ENCODE measurements at regions of chr3 and their contacts with region 1.

Region 1: DNA sequence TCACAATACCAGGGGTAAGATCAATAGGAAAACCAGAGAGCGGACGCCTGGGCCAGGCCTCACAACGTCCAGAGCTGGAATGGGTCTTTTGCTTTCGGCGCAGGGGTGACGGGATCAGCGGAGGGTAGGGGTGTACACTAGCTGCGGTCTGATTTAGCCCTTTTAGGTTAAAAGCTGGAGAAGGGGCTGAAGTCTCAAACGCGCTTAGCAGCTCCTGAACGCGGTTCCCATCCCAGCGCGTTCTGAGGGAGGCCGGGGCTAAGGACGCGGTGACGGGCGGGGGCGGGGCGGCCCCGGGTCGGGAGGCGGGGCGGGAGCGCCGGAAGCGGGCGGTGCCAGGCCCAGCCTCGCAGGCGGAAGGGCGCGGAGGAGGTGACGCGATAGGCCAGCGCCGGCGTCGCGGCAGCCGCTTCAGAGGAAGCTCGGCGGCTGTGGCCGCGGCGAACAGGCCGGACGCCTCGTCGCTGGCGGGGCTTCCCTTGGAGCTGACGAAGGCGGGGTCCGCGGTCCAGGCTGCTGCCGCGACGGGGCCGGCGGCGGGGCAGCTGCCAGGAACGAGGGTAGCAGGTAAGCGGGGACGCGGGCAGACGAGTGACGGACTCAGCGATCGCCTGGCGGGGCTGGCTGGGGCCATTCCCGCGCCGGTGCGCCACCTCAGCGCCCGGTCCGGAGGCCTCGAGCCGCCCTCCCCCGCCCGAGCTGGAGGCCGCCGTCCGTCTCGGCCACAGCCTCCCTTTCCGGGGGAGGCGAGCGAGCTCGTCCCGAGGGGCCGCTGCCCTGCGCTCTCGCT is at the start of gene SENP5:
- DNase-seq: peak; percentile 74 to 95 (median 87)
- ATAC-seq: peak; percentile 97
- H3K4me3 ChIP-seq: peak within 1 kb of the TSS; percentile 70 to 82
- H3K4me3 Mint-ChIP-seq: peak within 1 kb of the TSS; percentile 97
- H3K27ac ChIP-seq: peak within 1 kb of the TSS; percentile 92 to 94
- H3K27ac Mint-ChIP-seq: peak within 1 kb of the TSS; percentile 94
- H3K4me1 ChIP-seq: peaks cover 23% of the 10 kb centered on the region
- H3K4me1 Mint-ChIP-seq: peaks cover 28% of the 10 kb centered on the region
- H3K27me3 ChIP-seq: no peaks in the 10 kb centered on the region
- H3K27me3 Mint-ChIP-seq: no peaks in the 10 kb centered on the region
- CTCF ChIP-seq: no peak
- total RNA-seq, gene SENP5: 75.4 to 77.7 TPM

Region 2: DNA sequence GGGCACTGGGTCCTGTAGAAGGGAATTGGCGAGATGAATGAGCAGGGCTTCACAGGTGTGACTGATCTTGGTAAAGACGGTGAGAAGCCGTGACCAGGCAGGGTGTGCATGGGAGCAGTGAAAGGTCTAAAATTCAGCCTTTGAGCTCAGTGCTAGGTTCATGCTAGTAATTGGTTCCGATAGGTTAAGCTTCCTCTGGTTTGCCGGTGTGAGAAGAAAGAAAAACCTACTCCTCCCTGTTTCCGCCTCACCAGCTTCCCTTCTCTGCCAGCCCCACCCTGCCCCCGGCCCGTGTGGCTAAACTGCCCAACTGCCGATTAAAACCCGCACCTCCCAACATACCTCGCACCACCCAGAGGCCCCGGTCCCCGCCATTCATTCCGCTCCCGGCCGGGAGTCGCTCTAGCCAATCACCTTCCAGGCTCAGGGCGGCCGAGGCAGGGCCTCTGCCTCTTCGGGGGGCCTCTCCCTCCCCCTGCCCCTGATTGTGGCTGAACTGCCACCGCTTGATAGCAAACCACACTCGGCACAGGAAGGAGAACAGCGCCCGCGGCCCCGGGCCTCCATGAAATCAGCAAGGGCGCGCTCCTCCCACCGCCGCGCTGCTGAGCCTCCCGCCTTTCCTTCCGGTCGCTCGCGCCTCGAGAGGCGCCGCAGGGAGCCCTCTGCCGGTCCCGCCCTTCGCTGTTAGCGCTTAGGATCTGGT is 235.5 kb before region 1 on chr3:
- CTCF ChIA-PET with region 1: no interaction called
- POLR2A ChIA-PET with region 1: no interaction called
- intact Hi-C with region 1: loop called in 1 of 2 experiments (anchors 5 kb)
- DNase-seq: peak; percentile 70 to 96 (median 89)
- ATAC-seq: peak; percentile 79
- H3K4me3 ChIP-seq: peak overlapping the region; percentile 46 to 50
- H3K4me3 Mint-ChIP-seq: peak overlapping the region; percentile 80
- H3K27ac ChIP-seq: peak overlapping the region; percentile 56 to 80
- H3K27ac Mint-ChIP-seq: peak overlapping the region; percentile 93
- H3K4me1 ChIP-seq: peaks cover 36% of the 10 kb centered on the region
- H3K4me1 Mint-ChIP-seq: peaks cover 51% of the 10 kb centered on the region
- H3K27me3 ChIP-seq: no peaks in the 10 kb centered on the region
- H3K27me3 Mint-ChIP-seq: no peaks in the 10 kb centered on the region
- CTCF ChIP-seq: no peak

Region 3: DNA sequence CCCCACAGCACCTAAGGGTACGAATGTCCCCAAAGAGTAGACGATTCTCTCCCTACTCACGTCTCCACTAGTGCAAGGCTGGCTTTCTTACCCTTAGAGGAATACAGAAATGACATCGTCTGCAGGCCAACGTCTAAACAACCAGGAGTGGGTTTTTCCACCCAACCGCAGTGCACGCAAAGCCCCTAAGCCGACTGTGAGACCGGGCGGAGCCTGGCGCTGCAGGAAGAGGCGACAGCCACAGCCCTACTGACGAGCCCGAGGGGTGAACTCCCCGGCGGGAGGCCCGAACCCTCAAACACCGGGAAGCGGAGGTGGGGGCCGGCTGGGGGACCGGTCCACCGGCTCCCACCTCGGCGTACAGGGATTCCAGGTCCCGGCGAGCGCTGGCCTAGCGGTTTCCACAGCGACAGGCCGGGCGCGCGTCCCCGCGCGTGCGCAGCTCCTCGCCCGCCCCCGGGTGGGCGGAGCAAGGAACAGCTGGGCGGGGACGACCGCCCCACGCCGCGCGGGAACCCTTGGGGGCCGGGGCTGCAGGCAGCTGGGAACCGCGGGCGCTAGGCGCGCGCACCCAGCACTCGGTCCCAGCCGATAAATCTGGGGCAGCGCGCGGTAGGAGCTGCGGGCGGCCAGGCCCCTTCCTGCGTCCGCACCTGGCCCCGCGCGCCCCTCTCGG is 155.7 kb before region 1 on chr3 and contains the starts of genes CEP19 and PIGX:
- CTCF ChIA-PET with region 1: no interaction called
- POLR2A ChIA-PET with region 1: no interaction called
- intact Hi-C with region 1: loop called in 1 of 2 experiments (anchors 2 kb)
- DNase-seq: peak; percentile 77 to 99 (median 91)
- ATAC-seq: peak; percentile 83
- H3K4me3 ChIP-seq: peak within 1 kb of the TSS; percentile 72 to 93
- H3K4me3 Mint-ChIP-seq: peak within 1 kb of the TSS; percentile 88
- H3K27ac ChIP-seq: peak within 1 kb of the TSS; percentile 90 to 98
- H3K27ac Mint-ChIP-seq: peak within 1 kb of the TSS; percentile 98
- H3K4me1 ChIP-seq: peaks cover 17% of the 10 kb centered on the region
- H3K4me1 Mint-ChIP-seq: peaks cover 31% of the 10 kb centered on the region
- H3K27me3 ChIP-seq: no peaks in the 10 kb centered on the region
- H3K27me3 Mint-ChIP-seq: no peaks in the 10 kb centered on the region
- CTCF ChIP-seq: no peak
- total RNA-seq, gene CEP19: 0.39 to 0.41 TPM
- total RNA-seq, gene PIGX: 12.0 to 12.2 TPM

Region 4: DNA sequence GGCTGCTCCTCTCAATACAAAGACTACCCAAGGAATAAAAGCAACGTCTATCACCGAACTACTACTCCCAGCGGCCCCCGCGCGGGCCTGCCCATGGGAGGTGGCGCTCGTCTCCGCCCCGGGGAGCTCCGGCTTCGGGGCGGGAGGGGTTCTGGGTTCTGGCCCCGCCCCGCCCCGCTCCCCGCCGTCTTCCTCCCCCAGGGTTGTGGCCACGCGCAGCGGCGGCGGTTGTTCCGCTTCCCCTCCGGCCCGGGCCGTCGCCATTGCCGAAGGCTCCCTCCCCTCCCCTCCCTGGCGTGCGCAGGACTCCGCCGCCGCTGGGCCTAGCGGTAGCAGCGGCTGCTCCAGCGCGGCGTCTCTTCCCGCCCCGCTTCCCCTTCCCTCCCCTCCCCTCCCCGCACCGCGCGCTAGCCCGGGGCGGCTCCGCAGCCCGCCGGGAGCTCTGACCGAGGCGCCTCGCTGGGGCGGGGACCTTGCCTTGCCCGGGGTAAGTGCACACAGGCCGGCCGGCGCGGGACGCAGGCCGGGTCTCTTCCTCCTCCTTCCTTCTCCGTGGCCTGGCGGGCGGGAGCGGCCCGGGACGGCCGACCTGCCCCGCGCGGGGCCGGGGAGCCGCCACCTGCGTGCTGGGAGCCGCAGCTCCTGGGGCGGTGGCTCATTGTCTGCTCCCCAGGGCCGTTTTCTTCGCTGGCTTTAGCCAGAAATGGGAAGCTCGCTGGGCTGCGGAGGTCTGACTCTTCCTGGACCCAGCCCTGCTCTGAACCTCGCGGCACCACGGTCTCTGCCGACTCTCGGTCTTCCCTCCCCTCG is 127.8 kb before region 1 on chr3 and contains the start of gene PAK2:
- CTCF ChIA-PET with region 1: no interaction called
- POLR2A ChIA-PET with region 1: interaction called, 14 read pairs
- intact Hi-C with region 1: loop called (anchors 1 to 2 kb)
- DNase-seq: peak; percentile 78 to 95 (median 90)
- ATAC-seq: peak; percentile 84
- H3K4me3 ChIP-seq: peak within 1 kb of the TSS; percentile 69 to 77
- H3K4me3 Mint-ChIP-seq: peak within 1 kb of the TSS; percentile 99
- H3K27ac ChIP-seq: peak within 1 kb of the TSS; percentile 82 to 88
- H3K27ac Mint-ChIP-seq: peak within 1 kb of the TSS; percentile 98
- H3K4me1 ChIP-seq: peaks cover 27% of the 10 kb centered on the region
- H3K4me1 Mint-ChIP-seq: peaks cover 33% of the 10 kb centered on the region
- H3K27me3 ChIP-seq: no peaks in the 10 kb centered on the region
- H3K27me3 Mint-ChIP-seq: no peaks in the 10 kb centered on the region
- CTCF ChIP-seq: no peak
- total RNA-seq, gene PAK2: 29.9 to 30.4 TPM

Region 5: GRCh38 chr3:196837819-196838420 is 29.8 kb before region 1 on chr3:
- CTCF ChIA-PET with region 1: no interaction called
- POLR2A ChIA-PET with region 1: interaction called, 4 read pairs
- intact Hi-C with region 1: loop called in 1 of 2 experiments (anchors 1 kb)
- DNase-seq: peak; percentile 39 to 85 (median 75)
- ATAC-seq: peak; percentile 96
- H3K4me3 ChIP-seq: no peak overlapping the region
- H3K4me3 Mint-ChIP-seq: no peak overlapping the region
- H3K27ac ChIP-seq: no peak overlapping the region
- H3K27ac Mint-ChIP-seq: no peak overlapping the region
- H3K4me1 ChIP-seq: no peaks in the 10 kb centered on the region
- H3K4me1 Mint-ChIP-seq: peaks cover 2% of the 10 kb centered on the region
- H3K27me3 ChIP-seq: no peaks in the 10 kb centered on the region
- H3K27me3 Mint-ChIP-seq: no peaks in the 10 kb centered on the region
- CTCF ChIP-seq: peak; percentile 83

Region 6: GRCh38 chr3:196969660-196970546 is 102.2 kb after region 1 on chr3:
- CTCF ChIA-PET with region 1: interaction called, 4 read pairs
- POLR2A ChIA-PET with region 1: no interaction called
- intact Hi-C with region 1: loop called in 1 of 2 experiments (anchors 1 kb)
- DNase-seq: peak; percentile 29 to 82 (median 61)
- ATAC-seq: peak; percentile 72
- H3K4me3 ChIP-seq: peak overlapping the region in 1 of 2 experiments; percentile 65
- H3K4me3 Mint-ChIP-seq: peak overlapping the region; percentile 77
- H3K27ac ChIP-seq: no peak overlapping the region
- H3K27ac Mint-ChIP-seq: no peak overlapping the region
- H3K4me1 ChIP-seq: peaks cover 13% of the 10 kb centered on the region
- H3K4me1 Mint-ChIP-seq: peaks cover 4% of the 10 kb centered on the region
- H3K27me3 ChIP-seq: no peaks in the 10 kb centered on the region
- H3K27me3 Mint-ChIP-seq: peaks cover 11% of the 10 kb centered on the region
- CTCF ChIP-seq: peak; percentile 63

Region 7: GRCh38 chr3:197002701-197003454 is 135.2 kb after region 1 on chr3:
- CTCF ChIA-PET with region 1: no interaction called
- POLR2A ChIA-PET with region 1: no interaction called
- intact Hi-C with region 1: loop called in 1 of 2 experiments (anchors 1 kb)
- DNase-seq: peak; percentile 49 to 92 (median 77)
- ATAC-seq: peak; percentile 82
- H3K4me3 ChIP-seq: peak overlapping the region; percentile 41 to 58
- H3K4me3 Mint-ChIP-seq: no peak overlapping the region
- H3K27ac ChIP-seq: no peak overlapping the region
- H3K27ac Mint-ChIP-seq: no peak overlapping the region
- H3K4me1 ChIP-seq: peaks cover 8% of the 10 kb centered on the region
- H3K4me1 Mint-ChIP-seq: peaks cover 12% of the 10 kb centered on the region
- H3K27me3 ChIP-seq: no peaks in the 10 kb centered on the region
- H3K27me3 Mint-ChIP-seq: no peaks in the 10 kb centered on the region
- CTCF ChIP-seq: peak; percentile 47